PC-9 (cell line): ENCODE measurements at regions of chr11 and their contacts with region 1.

Region 1: DNA sequence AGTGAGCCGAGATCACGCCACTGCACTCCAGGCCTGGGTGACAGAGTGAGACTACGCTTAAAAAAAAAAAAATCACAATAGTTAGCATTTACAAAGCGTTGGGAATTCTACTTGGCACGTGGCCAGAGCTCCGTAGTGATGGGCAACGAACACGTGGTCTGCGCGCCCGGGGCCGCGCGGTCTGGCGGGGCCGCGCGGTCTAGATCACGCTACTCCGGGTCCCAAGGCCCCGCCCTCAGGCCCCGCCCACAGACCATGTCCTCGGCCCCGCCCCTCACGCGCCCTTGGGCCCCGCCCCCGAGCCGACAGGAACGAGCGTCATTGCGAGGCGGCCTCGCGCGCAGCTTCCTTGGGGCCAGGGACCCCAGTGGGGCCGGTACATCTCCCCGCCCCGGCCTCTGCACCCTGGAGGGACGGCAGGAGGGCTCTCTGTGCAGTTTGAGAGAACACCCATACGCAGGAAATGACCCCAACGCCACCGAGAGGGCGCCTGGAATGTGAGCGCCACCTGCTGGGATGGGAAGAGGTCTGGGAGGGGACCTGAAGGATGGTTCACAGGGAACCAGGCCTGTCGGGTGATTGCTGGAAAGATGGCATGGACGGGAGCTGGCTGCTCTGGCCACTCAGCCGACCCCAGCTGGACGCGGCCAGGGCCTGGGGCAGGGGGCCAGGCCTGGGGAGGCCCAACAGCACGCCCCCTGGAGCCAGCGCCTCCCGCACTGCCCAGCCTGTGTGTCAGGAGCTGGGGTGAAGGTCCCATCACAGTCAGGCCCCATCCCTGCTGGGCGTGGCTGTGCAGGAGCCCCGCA is 2.0 kb upstream of the PTDSS2 start:
- DNase-seq: peak; percentile 72 to 86
- H3K4me3 ChIP-seq: peak overlapping the region; percentile 72
- H3K27ac ChIP-seq: no peak overlapping the region
- H3K4me1 ChIP-seq: 0 out of 2 replicates have a peak, but pooled peaks cover 5% of the 10 kb centered on the region
- H3K27me3 ChIP-seq: no peaks in the 10 kb centered on the region
- CTCF ChIP-seq: peak; percentile 82

Region 2: DNA sequence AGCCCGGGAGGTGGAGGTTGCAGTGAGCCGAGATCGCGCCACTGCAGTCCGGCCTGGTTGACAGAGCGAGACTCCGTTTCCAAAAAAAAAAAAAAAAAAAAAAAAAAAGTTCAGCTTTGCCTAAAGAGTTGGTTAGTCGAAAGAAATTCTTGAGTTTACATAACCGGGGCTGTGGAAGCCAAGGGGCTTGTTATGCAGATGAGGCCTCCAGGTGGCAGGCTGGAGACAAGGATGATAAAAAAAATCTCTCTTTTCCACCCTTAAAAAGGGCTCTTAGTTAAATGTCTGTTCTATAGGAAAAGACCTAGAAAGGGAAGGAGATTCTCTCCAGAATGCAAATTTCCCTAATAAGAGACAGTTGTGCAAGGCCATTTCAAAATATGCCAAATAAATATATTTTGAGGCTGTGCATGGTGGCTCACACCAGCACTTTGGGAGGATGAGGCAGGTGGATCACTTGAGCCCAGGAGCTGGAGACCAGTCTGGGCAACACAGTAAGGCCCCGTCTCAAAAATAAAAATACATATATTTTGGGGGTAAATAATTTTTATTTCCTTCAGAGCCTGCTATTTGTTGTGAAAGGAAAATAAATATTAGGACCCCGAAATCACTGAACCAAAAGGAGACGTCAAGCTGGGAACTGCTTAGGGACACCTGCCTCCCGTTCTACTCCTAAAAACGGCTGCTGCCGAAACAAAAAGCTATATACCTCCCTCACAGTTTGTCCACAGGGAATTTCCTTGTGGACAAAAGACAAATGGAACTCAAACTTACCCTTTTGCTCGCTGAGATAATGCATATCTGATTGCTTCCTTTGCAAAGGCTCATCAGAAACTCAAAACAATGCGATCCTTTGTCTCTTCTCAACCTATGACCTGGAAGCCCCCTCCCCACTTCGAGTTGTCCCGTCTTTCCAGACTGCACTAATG is 142.9 kb before region 1 on chr11:
- CTCF ChIA-PET with region 1: no interaction called
- POLR2A ChIA-PET with region 1: no interaction called
- intact Hi-C with region 1: loop called (anchors 5 kb)
- DNase-seq: peak in 1 of 2 experiments; percentile 54
- H3K4me3 ChIP-seq: no peak overlapping the region
- H3K27ac ChIP-seq: no peak overlapping the region
- H3K4me1 ChIP-seq: peaks cover 10% of the 10 kb centered on the region
- H3K27me3 ChIP-seq: no peaks in the 10 kb centered on the region
- CTCF ChIP-seq: peak; percentile 61

Region 3: DNA sequence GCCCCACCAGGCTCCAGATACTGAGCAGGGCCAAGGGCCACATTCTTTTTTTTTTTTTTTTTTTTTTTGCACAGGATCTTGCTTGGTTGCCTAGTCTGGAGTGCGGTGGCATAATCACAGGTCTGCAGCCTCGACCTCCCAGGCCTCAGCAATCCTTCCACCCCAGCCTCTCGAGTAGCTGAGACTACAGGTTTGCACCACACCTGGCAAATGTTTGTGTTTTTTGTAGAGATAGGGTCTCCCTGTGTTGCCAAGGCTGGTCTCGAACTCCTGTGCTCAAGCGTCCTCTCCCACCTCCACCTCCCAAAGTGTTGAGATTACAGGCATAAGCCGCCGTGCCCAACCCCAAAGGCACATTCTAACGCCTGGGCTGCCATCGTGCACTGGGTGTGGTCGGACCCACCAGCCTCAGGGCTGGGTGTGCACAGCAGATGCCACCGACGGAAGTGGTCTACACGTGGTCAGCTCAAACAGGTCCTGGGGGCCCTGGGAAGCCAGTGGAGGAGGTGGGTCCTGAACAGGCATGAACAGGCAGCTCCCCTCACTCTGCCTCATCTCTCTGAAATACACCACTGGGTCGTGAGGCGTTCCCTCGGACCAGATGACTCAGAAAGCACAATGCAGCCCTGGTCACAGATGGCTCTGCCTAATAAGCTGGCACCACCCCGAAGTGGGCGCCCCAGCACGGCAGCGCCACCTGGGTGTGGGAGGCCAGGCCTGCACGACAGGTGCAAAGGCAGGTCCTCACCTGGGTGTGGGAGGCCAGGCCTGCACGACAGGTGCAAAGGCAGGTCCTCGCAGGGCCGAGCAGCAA is 84.0 kb before region 1 on chr11:
- CTCF ChIA-PET with region 1: interaction called, 3 read pairs
- POLR2A ChIA-PET with region 1: interaction called, 37 read pairs
- intact Hi-C with region 1: no loop called
- DNase-seq: peak; percentile 76 to 85
- H3K4me3 ChIP-seq: no peak overlapping the region; the same call in 1 of the 2 replicates
- H3K27ac ChIP-seq: no peak overlapping the region
- H3K4me1 ChIP-seq: peaks cover 8% of the 10 kb centered on the region; the same call in 1 of the 2 replicates
- H3K27me3 ChIP-seq: peaks cover 15% of the 10 kb centered on the region
- CTCF ChIP-seq: peak; percentile 78

Region 4: DNA sequence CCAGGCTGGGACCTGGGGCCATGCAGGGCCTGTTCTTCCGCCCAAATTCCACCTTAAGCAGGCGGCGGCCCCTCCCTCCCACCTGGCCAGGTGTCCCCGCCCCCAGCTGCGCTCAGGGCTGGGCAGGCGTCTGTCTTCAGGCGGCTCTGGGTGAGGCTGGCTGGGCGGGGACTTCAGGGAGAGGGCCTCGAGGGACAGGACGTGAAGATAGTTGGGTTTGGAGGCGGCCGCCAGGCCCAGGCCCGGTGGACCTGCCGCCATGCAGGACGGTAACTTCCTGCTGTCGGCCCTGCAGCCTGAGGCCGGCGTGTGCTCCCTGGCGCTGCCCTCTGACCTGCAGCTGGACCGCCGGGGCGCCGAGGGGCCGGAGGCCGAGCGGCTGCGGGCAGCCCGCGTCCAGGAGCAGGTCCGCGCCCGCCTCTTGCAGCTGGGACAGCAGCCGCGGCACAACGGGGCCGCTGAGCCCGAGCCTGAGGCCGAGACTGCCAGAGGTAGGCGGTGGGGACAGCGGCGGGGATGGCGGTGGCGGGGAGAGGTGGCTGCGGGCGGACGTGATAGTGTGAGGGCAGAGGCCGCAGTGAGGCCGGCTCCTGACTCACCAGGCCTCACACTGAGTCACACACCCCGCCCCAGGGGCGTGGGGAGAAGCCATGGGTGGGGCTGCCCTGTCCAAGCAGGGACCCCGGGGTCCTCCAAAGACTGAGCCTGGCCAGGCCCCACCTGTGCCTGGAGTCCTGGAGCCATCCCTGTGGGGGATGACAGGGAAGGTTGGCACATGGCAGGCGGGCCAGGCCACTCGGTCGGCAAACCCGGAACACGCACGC is 53.9 kb before region 1 on chr11 and contains the start of gene PKP3:
- CTCF ChIA-PET with region 1: no interaction called
- POLR2A ChIA-PET with region 1: no interaction called
- intact Hi-C with region 1: loop called (anchors 2 kb)
- DNase-seq: peak; percentile 83 to 91
- H3K4me3 ChIP-seq: peak within 1 kb of the TSS; percentile 89
- H3K27ac ChIP-seq: peak within 1 kb of the TSS; percentile 92
- H3K4me1 ChIP-seq: peaks cover 10% of the 10 kb centered on the region
- H3K27me3 ChIP-seq: no peaks in the 10 kb centered on the region
- CTCF ChIP-seq: no peak
- total RNA-seq, gene PKP3: 83.7 and 109 TPM in 2 replicates

Region 5: GRCh38 chr11:414318-414857 is 33.7 kb before region 1 on chr11:
- CTCF ChIA-PET with region 1: interaction called, 4 read pairs
- POLR2A ChIA-PET with region 1: interaction called, 12 read pairs
- intact Hi-C with region 1: no loop called
- DNase-seq: no peak
- H3K4me3 ChIP-seq: no peak overlapping the region
- H3K27ac ChIP-seq: no peak overlapping the region
- H3K4me1 ChIP-seq: peaks cover 5% of the 10 kb centered on the region
- H3K27me3 ChIP-seq: no peaks in the 10 kb centered on the region
- CTCF ChIP-seq: no peak

Region 6: GRCh38 chr11:506238-506994 is 58.3 kb after region 1 on chr11:
- CTCF ChIA-PET with region 1: no interaction called
- POLR2A ChIA-PET with region 1: no interaction called
- intact Hi-C with region 1: loop called (anchors 1 kb)
- DNase-seq: peak; percentile 80 to 92
- H3K4me3 ChIP-seq: peak overlapping the region; percentile 100
- H3K27ac ChIP-seq: peak overlapping the region; percentile 99
- H3K4me1 ChIP-seq: peaks cover 5% of the 10 kb centered on the region; the same call in 1 of the 2 replicates
- H3K27me3 ChIP-seq: no peaks in the 10 kb centered on the region
- CTCF ChIP-seq: no peak